Heart right ventricle (tissue), 16 donors: ENCODE measurements at regions of chr10 and their contacts with region 1.

Region 1: GRCh38 chr10:80945264-80945880 is 407.7 kb downstream of the SH2D4B start:
- DNase-seq: peak in 1 of 2 donors; percentile 12
- ATAC-seq: peak in 7 of 8 donors; percentile 38 to 76 (median 57)
- H3K4me3 ChIP-seq: no peak overlapping the region
- H3K27ac ChIP-seq: no peak overlapping the region
- H3K4me1 ChIP-seq: peaks cover 0 to 11% (median 0%) of the 10 kb centered on the region in 9 donors
- H3K27me3 ChIP-seq: no peaks in the 10 kb centered on the region
- CTCF ChIP-seq: peak in 8 of 9 donors; percentile 28 to 68 (median 55)

Region 2: DNA sequence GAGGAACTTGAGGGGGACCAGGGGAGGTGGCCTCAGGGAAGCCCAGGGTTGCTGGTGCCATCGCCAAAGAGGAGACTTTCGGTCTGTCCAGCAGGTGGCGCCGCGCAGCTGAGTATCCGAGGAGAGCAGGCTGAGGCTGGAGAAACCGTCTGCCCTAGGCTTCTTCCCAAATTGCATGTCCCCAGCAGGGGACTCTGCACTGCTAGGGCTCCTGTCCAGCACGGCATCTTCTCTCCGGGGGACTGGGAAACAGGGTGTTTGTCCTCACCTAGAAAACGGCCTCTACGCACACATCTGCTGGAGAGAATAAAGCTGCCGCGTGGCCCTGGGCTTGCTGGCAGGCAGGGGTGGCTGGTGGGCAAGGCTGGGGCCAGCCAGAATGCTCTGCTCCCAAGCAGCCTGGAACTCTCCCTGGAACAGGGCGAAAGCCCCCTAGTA is 245.8 kb before region 1 on chr10:
- intact Hi-C with region 1: loop called in 2 of 10 experiments (anchors 10 kb)
- DNase-seq: peak; percentile 81 to 85
- ATAC-seq: peak; percentile 81 to 91 (median 88)
- H3K4me3 ChIP-seq: no peak overlapping the region
- H3K27ac ChIP-seq: no peak overlapping the region
- H3K4me1 ChIP-seq: peaks cover 0 to 14% (median 8%) of the 10 kb centered on the region in 9 donors
- H3K27me3 ChIP-seq: peaks cover 0 to 3% (median 0%) of the 10 kb centered on the region in 7 donors
- CTCF ChIP-seq: peak; percentile 63 to 89 (median 87)